ENCODE measurements at regions of chr10 and their contacts with region 1.

Region 1: GRCh38 chr10:29998142-29998808 is 61.1 kb downstream of the JCAD start:
- DNase-seq: peak; percentile 52 to 85
- H3K4me3 ChIP-seq: no peak overlapping the region
- H3K4me1 ChIP-seq: no peaks in the 10 kb centered on the region
- H3K27me3 ChIP-seq: no peaks in the 10 kb centered on the region

Region 2: GRCh38 chr10:29784175-29784773 is 214.0 kb before region 1 on chr10:
- in situ Hi-C with region 1: no loop called
- DNase-seq: no peak
- H3K4me3 ChIP-seq: no peak overlapping the region
- H3K4me1 ChIP-seq: no peaks in the 10 kb centered on the region
- H3K27me3 ChIP-seq: no peaks in the 10 kb centered on the region; the same call in 1 of the 2 replicates

Region 3: GRCh38 chr10:30231071-30231652 is 232.9 kb after region 1 on chr10:
- in situ Hi-C with region 1: loop called (anchors 10 kb)
- DNase-seq: no peak
- H3K4me3 ChIP-seq: no peak overlapping the region
- H3K4me1 ChIP-seq: no peaks in the 10 kb centered on the region
- H3K27me3 ChIP-seq: no peaks in the 10 kb centered on the region

Measured in HAP-1 (cell line).